ENCODE measurements at regions of chr6 and their contacts with region 1.

Region 1: GRCh38 chr6:151451950-151452749 is at the start of gene RMND1:
- DNase-seq: peak; percentile 100
- ATAC-seq: peak; percentile 99
- total RNA-seq, gene RMND1: 15.7 TPM

Region 2: GRCh38 chr6:151004415-151005024 is 447.6 kb before region 1 on chr6:
- intact Hi-C with region 1: no loop called
- DNase-seq: no peak
- ATAC-seq: peak; percentile 67

Region 3: GRCh38 chr6:151390276-151391032 is 61.7 kb before region 1 on chr6:
- intact Hi-C with region 1: loop called (anchors 5 kb)
- DNase-seq: peak; percentile 99
- ATAC-seq: peak; percentile 93